Activated CD4-positive, alpha-beta T cell treated with anti-CD3 and anti-CD28 coated beads for 36 hours (primary cell): ENCODE measurements at regions of chr6 and their contacts with region 1.

Region 1: DNA sequence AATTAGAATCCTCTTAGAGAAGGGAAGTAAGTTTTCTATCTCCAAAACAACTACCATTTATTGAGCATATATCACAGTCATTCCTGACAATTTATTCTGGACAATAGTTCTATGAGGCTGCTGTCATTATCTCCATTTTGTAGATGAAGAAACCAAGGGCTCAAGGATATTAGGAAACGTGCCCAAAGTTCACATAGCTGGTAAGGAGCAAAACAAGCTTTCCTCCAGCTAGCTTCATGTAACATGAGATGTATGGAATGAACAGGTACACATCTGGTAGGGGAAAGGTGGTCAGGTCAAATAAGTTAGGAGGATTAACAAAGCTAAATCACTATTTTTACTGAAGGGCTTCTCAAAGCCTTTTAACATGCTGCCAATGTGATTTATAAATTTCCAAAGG is 76.4 kb downstream of the HACE1 start:
- DNase-seq: no peak
- ATAC-seq: no peak
- H3K4me3 Mint-ChIP-seq: no peak overlapping the region
- H3K27ac Mint-ChIP-seq: no peak overlapping the region
- H3K4me1 Mint-ChIP-seq: peaks cover 13% of the 10 kb centered on the region
- H3K27me3 Mint-ChIP-seq: no peaks in the 10 kb centered on the region

Region 2: GRCh38 chr6:104728448-104728847 is 54.9 kb before region 1 on chr6:
- CTCF ChIA-PET with region 1: no interaction called
- POLR2A ChIA-PET with region 1: interaction called, 10 read pairs
- intact Hi-C with region 1: no loop called
- DNase-seq: no peak
- ATAC-seq: no peak
- H3K4me3 Mint-ChIP-seq: no peak overlapping the region
- H3K27ac Mint-ChIP-seq: no peak overlapping the region
- H3K4me1 Mint-ChIP-seq: no peaks in the 10 kb centered on the region
- H3K27me3 Mint-ChIP-seq: no peaks in the 10 kb centered on the region

Region 3: GRCh38 chr6:105184921-105185320 is 401.6 kb after region 1 on chr6:
- CTCF ChIA-PET with region 1: no interaction called
- POLR2A ChIA-PET with region 1: no interaction called
- intact Hi-C with region 1: no loop called
- DNase-seq: no peak
- ATAC-seq: no peak
- H3K4me3 Mint-ChIP-seq: no peak overlapping the region
- H3K27ac Mint-ChIP-seq: no peak overlapping the region
- H3K4me1 Mint-ChIP-seq: peaks cover 2% of the 10 kb centered on the region
- H3K27me3 Mint-ChIP-seq: peaks cover 37% of the 10 kb centered on the region